IMR-90 (cell line): ENCODE measurements at regions of chr12 and their contacts with region 1.

Region 1: DNA sequence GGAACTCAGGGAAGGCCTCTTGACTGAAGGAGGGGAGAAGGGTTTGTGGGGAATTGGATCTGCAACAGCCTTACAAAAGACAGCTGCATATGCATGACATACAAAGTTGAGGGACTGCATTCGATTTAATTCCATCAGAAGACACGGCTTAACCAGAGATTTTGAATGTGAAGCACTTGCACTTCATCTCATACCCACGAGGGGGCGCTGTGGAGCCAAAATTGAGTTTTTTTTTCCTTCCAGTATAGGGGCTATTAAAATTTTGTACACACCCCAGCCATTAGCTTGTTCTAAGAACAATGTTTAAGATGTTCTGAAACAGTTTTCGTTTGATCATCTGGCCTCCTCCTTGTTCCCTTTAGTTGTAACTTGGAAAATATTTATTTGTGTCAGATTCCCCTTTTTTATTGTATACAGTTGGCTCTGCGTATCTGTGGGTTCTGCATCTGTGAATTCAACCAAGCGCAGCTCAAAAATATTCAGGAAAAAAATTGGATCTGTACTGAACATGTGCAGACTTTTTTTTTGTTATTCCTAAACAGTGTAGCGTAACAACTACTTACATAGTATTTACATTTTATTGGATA is 1.6 kb downstream of the SUDS3 start:
- DNase-seq: peak; percentile 44
- ATAC-seq: peak; percentile 6; the same call in 1 of the 2 replicates
- H3K4me3 ChIP-seq: peak overlapping the region; percentile 70
- H3K27ac ChIP-seq: peak overlapping the region; percentile 35; the same call in 1 of the 2 replicates
- H3K4me1 ChIP-seq: peaks cover 1% of the 10 kb centered on the region; the same call in 1 of the 2 replicates
- H3K27me3 ChIP-seq: no peaks in the 10 kb centered on the region
- CTCF ChIP-seq: peak; percentile 84
- POLR2A ChIP-seq: no peak
- RAD21 ChIP-seq: peak; percentile 56

Region 2: DNA sequence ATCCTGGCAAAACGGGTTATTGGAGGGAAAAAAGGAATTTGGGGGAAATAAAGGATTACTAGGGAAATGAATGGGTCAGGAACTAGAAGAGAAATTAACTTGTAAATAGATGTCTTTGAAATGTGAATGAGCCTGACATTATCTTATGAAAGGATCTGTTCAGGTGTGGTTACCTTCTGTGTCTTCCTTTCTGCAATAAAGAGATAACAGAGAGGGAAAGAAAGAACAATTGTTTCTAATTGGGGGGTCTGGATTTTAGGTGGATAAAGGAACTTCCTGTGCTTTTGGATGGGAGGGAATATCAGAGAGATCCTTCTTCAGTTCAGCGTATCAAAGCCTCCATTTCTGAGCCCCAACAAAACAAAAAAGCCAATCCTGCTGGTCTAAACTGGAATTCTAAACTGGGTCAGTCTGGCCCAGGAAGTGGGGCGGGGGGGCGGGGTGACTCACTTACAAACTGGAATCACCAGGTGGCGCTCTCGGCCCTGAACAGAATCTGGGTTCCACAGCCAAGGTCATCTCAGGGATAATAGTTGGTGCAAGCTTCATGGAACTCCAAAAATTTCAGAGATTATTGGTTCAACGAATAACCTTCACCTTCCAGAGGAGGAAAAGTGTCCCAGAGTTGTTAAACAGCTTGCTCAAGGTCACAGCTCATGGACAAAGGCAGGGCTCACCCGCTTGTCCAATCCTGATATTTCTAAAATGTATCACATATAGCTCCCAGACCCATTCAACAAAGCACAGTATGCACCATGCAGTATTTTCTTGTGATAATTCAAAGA is 257.2 kb before region 1 on chr12:
- CTCF ChIA-PET with region 1: interaction called, 9 read pairs
- POLR2A ChIA-PET with region 1: no interaction called
- dilution Hi-C with region 1: no loop called
- in situ Hi-C with region 1: no loop called
- intact Hi-C with region 1: loop called (anchors 1 kb)
- DNase-seq: peak; percentile 61
- ATAC-seq: peak; percentile 97
- H3K4me3 ChIP-seq: no peak overlapping the region
- H3K27ac ChIP-seq: peak overlapping the region; percentile 39; the same call in 1 of the 2 replicates
- H3K4me1 ChIP-seq: peaks cover 2% of the 10 kb centered on the region; the same call in 1 of the 2 replicates
- H3K27me3 ChIP-seq: no peaks in the 10 kb centered on the region
- CTCF ChIP-seq: peak; percentile 50
- POLR2A ChIP-seq: no peak
- RAD21 ChIP-seq: peak; percentile 45